ENCODE measurements at regions of chr10 and their contacts with region 1.

Region 1: GRCh38 chr10:79532-80215 is 30.6 kb upstream of the TUBB8 start:
- DNase-seq: peak in 1 of 9 experiments; percentile 7
- ATAC-seq: no peak
- H3K4me3 ChIP-seq: no peak overlapping the region
- H3K4me3 Mint-ChIP-seq: no peak overlapping the region
- H3K27ac ChIP-seq: no peak overlapping the region
- H3K27ac Mint-ChIP-seq: no peak overlapping the region
- H3K4me1 ChIP-seq: no peaks in the 10 kb centered on the region
- H3K4me1 Mint-ChIP-seq: no peaks in the 10 kb centered on the region
- H3K27me3 ChIP-seq: peaks cover 0 to 11% of the 10 kb centered on the region in 2 experiments
- H3K27me3 Mint-ChIP-seq: peaks cover 27% of the 10 kb centered on the region
- CTCF ChIP-seq: no peak

Region 2: DNA sequence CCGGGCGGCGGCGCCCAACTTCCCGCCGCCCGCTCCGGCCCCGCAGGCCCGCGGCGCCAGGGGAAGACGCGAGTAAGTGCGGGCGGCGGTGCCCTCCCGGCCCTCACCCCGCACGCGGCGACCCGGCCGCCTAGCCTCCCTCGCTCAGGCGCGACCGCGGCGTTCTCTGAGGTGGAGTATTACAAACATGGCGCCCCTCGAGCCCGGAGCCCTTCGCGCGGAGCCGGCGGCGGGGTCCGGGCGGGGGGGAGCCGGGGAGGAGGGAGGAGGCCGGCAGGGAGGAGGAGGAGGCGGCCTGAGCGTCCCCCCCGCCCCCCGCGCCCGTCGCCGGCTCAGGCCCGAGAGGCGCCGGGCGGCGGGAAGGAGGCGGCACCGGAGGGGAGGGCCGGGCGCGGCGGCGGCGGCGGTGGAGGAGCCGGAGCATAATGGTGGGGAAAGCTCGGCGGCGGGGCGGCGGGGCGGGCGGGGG is 55.5 kb after region 1 on chr10 and contains the start of gene ZMYND11:
- CTCF ChIA-PET with region 1: no interaction called
- POLR2A ChIA-PET with region 1: interaction called, 3 read pairs
- intact Hi-C with region 1: loop called in 1 of 2 experiments (anchors 2 kb)
- DNase-seq: peak; percentile 46 to 84 (median 69)
- ATAC-seq: peak; percentile 49
- H3K4me3 ChIP-seq: peak within 1 kb of the TSS; percentile 56 to 80
- H3K4me3 Mint-ChIP-seq: peak within 1 kb of the TSS; percentile 92
- H3K27ac ChIP-seq: peak within 1 kb of the TSS; percentile 72 to 83
- H3K27ac Mint-ChIP-seq: peak within 1 kb of the TSS; percentile 94
- H3K4me1 ChIP-seq: peaks cover 28% of the 10 kb centered on the region
- H3K4me1 Mint-ChIP-seq: peaks cover 51% of the 10 kb centered on the region
- H3K27me3 ChIP-seq: no peaks in the 10 kb centered on the region
- H3K27me3 Mint-ChIP-seq: no peaks in the 10 kb centered on the region
- CTCF ChIP-seq: no peak
- total RNA-seq, gene ZMYND11: 19.8 to 19.9 TPM

Region 3: GRCh38 chr10:1335642-1336041 is 1256.0 kb after region 1 on chr10:
- CTCF ChIA-PET with region 1: no interaction called
- POLR2A ChIA-PET with region 1: no interaction called
- intact Hi-C with region 1: no loop called
- DNase-seq: no peak
- ATAC-seq: no peak
- H3K4me3 ChIP-seq: no peak overlapping the region
- H3K4me3 Mint-ChIP-seq: no peak overlapping the region
- H3K27ac ChIP-seq: no peak overlapping the region
- H3K27ac Mint-ChIP-seq: no peak overlapping the region
- H3K4me1 ChIP-seq: no peaks in the 10 kb centered on the region
- H3K4me1 Mint-ChIP-seq: no peaks in the 10 kb centered on the region
- H3K27me3 ChIP-seq: no peaks in the 10 kb centered on the region
- H3K27me3 Mint-ChIP-seq: peaks cover 14% of the 10 kb centered on the region
- CTCF ChIP-seq: no peak

Measured in CD8-positive, alpha-beta T cell (primary cell).